Left colon (tissue), 2 donors: ENCODE measurements at regions of chr12 and their contacts with region 1.

Region 1: DNA sequence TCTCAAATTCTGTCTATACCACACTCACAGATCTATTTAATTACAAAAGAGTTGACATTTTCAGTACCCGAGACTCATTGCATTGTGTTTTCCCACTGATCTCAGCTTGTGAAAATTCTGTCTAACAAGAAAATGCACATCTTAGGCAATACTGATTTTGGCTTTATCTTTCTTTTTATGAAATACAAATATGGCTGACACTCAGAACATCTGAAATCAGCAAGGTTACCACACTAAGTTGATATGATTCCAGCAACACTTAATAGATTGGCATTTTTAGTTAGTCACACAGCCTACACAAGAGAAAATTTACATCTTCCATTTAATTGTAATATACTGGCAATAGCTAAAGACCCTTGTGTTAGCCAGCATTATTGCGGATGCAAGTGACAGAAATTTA is 40.3 kb downstream of the PEX5 start:
- DNase-seq: no peak
- ATAC-seq: no peak

Region 2: GRCh38 chr12:7634561-7634960 is 404.8 kb after region 1 on chr12:
- intact Hi-C with region 1: loop called in 1 of 2 experiments (anchors 5 kb)
- DNase-seq: no peak
- ATAC-seq: no peak